ENCODE measurements at regions of chr15 and their contacts with region 1.

Region 1: GRCh38 chr15:97984157-97984556 is 23.7 kb downstream of the ARRDC4 start:
- DNase-seq: no peak
- ATAC-seq: no peak
- H3K4me3 ChIP-seq: no peak overlapping the region
- H3K27ac ChIP-seq: no peak overlapping the region
- H3K4me1 ChIP-seq: no peaks in the 10 kb centered on the region
- H3K27me3 ChIP-seq: no peaks in the 10 kb centered on the region

Region 2: DNA sequence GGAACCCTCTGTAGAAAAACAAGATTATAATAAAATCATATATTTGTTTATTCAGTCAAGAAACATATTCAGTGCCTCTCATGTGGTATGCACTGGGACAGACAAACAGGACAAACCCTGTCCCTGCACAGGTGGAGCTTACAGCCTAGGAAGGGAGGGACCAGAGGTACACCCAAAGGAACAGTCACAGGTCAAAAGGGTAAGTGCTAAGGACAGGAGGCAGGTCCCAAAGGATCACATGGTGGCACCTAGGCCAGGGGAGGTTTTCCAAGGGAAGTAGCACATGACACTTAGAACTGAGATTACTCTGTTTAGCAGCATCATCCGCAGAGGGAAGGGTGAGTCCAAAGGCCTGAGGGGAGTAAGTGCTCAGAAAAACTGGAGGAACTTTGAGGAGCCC is 278.1 kb before region 1 on chr15:
- intact Hi-C with region 1: no loop called
- DNase-seq: no peak
- ATAC-seq: no peak
- H3K4me3 ChIP-seq: no peak overlapping the region
- H3K27ac ChIP-seq: no peak overlapping the region
- H3K4me1 ChIP-seq: no peaks in the 10 kb centered on the region
- H3K27me3 ChIP-seq: no peaks in the 10 kb centered on the region

Region 3: DNA sequence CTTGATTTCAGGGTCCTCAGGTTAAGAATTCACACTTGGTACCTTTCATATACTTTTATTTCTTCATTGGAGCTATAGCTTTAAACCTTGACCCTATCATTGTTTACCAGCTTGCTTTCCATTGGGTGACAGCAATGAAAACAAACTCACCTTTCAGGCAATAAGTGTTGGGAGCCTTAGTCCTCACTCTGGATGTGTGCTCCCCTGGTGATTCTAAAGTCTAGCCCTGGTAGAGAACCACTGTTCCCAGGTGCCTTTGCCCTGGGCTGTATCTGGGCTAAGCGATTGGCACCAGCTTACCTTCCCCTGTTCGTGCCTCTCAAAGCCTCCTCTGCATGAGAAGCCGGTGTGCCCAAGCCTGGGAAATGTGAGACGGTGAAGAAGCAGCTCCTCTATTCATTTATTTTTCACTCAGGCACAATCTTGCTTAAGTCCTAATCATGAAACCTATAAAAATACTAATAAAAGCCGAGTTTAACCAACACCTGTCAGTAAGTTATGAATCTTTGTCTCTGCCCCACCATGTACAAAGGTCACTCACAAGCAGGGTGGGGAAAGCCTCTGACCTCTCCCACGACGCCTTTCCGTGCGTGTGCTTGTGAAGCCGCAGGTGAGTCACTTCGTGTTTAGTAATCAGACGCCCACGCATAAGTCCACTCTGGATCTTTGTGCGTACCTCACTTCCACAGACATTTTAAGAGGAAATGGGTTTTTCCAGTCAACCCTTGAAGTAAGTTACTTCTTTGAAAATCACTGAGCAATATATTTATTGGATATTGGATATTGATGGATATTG is 36.5 kb before region 1 on chr15:
- intact Hi-C with region 1: loop called in 1 of 2 experiments (anchors 2 kb)
- DNase-seq: no peak
- ATAC-seq: no peak
- H3K4me3 ChIP-seq: no peak overlapping the region
- H3K27ac ChIP-seq: no peak overlapping the region
- H3K4me1 ChIP-seq: no peaks in the 10 kb centered on the region
- H3K27me3 ChIP-seq: no peaks in the 10 kb centered on the region